Aorta (tissue), 5 donors: ENCODE measurements at regions of chr19 and their contacts with region 1.

Region 1: GRCh38 chr19:15379083-15379995 is at the start of gene AKAP8:
- DNase-seq: peak; percentile 99
- ATAC-seq: peak; percentile 98
- H3K4me3 ChIP-seq: peak within 1 kb of the TSS; percentile 78 to 82
- H3K27ac ChIP-seq: peak within 1 kb of the TSS; percentile 71 to 87
- H3K4me1 ChIP-seq: no peaks in the 10 kb centered on the region
- H3K27me3 ChIP-seq: no peaks in the 10 kb centered on the region
- total RNA-seq, gene AKAP8: 35.3 to 48.1 TPM

Region 2: GRCh38 chr19:15050639-15051038 is 328.7 kb before region 1 on chr19:
- intact Hi-C with region 1: no loop called
- DNase-seq: no peak
- ATAC-seq: no peak
- H3K4me3 ChIP-seq: no peak overlapping the region
- H3K27ac ChIP-seq: no peak overlapping the region
- H3K4me1 ChIP-seq: no peaks in the 10 kb centered on the region
- H3K27me3 ChIP-seq: no peaks in the 10 kb centered on the region

Region 3: DNA sequence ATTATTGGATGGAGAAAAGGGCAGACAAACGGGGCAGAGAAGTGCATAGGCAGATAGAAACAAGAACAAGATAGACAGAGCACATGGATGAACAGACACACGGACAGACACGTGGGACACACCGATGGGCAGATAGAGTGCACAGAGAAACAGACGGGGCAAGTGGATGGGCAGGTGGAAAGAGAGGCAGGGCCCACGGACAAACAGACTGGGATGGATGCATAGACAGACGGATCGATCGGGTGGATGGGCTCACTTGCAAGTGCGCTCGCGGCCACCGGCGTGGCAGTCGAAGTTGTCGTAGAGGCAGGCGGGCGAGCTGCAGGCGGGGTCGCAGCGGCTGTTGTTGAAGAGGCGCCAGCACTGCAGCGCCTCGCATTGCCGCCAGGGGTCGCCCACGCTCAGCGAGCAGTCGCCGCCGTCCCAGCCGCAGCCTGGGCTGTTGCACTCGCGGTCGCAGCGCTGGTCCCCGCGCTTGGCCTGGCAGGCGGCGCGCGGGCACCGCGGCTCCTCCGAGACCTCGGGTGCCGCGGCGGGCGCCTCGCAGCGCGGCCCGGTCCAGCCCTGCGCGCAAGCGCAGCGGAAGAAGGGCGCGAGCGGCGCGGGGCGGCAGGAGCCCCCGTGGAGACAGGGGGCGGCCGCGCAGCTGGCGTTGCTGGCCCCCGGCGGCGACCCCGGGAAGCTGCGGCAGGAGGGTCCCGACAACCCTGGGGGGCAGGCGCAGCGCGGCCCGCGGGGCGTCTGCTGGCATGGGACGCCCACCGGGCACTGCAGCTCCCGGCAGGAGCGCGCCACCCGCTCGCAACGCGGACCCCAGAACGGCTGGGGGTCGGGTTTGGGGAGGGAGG is 201.8 kb before region 1 on chr19:
- intact Hi-C with region 1: loop called (anchors 5 to 10 kb)
- DNase-seq: peak; percentile 89 to 95
- ATAC-seq: peak; percentile 94
- H3K4me3 ChIP-seq: no peak overlapping the region
- H3K27ac ChIP-seq: peak overlapping the region in 1 of 2 donors; percentile 11
- H3K4me1 ChIP-seq: no peaks in the 10 kb centered on the region
- H3K27me3 ChIP-seq: no peaks in the 10 kb centered on the region

Region 4: DNA sequence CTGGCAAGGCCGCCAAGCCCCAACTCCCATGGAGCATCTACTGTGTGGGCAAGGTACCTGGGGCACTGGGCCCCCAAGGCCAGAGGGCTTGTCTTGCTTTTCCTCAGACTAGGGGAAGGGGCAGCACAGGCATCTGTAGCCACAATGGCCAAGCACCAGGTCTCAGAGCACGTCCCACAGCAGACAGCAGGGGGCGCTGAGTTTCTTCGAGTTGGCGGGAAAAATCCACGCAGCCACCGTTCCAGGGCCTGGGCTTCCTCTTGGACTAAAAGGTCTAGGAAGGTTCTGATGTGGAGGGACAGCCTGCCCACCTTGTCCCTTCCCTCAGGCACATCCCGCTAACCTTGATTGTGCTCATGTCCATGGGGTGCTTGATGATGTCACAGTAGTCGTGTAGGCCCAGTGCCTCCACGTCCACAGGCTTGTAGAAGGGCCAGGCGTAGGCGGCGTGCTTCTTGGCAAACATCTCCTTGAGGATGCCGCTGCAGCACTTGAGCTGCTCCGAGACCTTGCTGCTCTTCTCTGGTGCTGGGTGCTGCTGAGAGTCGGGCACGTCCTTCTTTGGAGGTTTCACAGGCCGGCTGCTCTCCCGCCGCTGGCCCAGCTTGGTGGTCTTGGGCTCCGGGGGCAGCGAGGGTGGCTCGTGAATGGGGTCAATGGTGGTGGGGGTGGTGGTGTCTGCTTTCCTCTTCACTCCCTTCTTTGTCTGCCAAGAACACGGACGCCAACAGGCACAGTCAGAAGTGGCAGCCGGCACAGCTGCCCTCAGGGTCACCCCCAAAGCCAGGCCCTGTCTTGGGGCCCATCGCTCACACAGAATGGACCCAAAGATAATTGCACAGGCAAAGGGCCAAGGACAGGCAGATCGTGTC is 115.0 kb before region 1 on chr19:
- intact Hi-C with region 1: loop called in 1 of 2 experiments (anchors 2 kb)
- DNase-seq: peak; percentile 86 to 94
- ATAC-seq: peak; percentile 63
- H3K4me3 ChIP-seq: no peak overlapping the region
- H3K27ac ChIP-seq: peak overlapping the region in 1 of 2 donors; percentile 39
- H3K4me1 ChIP-seq: no peaks in the 10 kb centered on the region
- H3K27me3 ChIP-seq: no peaks in the 10 kb centered on the region

Region 5: DNA sequence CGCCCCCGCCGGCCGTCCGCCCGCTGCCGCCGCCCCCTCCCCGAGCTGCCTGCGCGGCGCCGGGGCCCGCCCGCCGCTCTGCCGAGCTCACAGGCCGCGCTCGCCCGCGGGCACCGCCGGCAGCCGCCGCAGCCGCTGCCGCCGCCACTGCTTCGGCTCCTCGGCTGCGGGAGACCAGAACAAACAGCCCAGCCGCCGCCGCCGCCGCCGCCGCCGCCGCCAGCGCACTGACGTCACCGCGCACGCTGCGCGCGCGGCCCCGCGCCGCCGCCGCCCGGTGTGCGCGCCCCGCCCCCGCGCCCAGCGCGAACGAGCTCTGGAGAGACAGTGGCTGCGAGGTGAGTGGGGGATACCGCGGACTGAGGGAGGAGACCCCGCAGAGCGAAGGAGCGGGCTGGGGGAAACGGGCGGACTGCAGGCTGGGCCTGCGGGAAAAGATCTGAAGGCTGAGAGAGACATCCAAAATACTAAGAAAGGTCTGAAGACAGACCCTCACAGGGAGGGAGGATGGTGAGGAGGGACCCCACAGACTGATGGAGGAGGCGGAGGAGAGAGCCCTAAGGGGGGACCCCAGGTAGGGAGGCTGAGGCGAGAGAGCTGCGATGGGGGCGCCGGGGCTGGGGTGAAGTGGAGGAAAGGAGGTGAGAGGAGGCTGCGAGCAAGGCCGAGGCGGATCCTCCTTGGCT is 46.9 kb before region 1 on chr19 and contains the start of gene BRD4:
- intact Hi-C with region 1: loop called (anchors 5 kb)
- DNase-seq: peak; percentile 80 to 91
- ATAC-seq: peak; percentile 85
- H3K4me3 ChIP-seq: peak within 1 kb of the TSS; percentile 99 to 100
- H3K27ac ChIP-seq: peak within 1 kb of the TSS; percentile 99 to 100
- H3K4me1 ChIP-seq: peaks cover 0 to 2% of the 10 kb centered on the region in 2 donors
- H3K27me3 ChIP-seq: no peaks in the 10 kb centered on the region
- total RNA-seq, gene BRD4: 123 to 126 TPM

Region 6: GRCh38 chr19:15418588-15419412 is 39.5 kb after region 1 on chr19 and contains the start of gene AKAP8L:
- intact Hi-C with region 1: loop called in 1 of 2 experiments (anchors 1 kb)
- DNase-seq: peak; percentile 99
- ATAC-seq: peak; percentile 97
- H3K4me3 ChIP-seq: peak within 1 kb of the TSS; percentile 77 to 86
- H3K27ac ChIP-seq: peak within 1 kb of the TSS; percentile 62 to 93
- H3K4me1 ChIP-seq: no peaks in the 10 kb centered on the region
- H3K27me3 ChIP-seq: no peaks in the 10 kb centered on the region
- total RNA-seq, gene AKAP8L: 70.8 to 106 TPM

Region 7: GRCh38 chr19:15479391-15480345 is 100.3 kb after region 1 on chr19 and contains the start of gene PGLYRP2:
- intact Hi-C with region 1: no loop called
- DNase-seq: peak in 1 of 2 donors; percentile 72
- ATAC-seq: peak; percentile 50
- H3K4me3 ChIP-seq: no peak within 1 kb of the TSS
- H3K27ac ChIP-seq: no peak within 1 kb of the TSS
- H3K4me1 ChIP-seq: no peaks in the 10 kb centered on the region
- H3K27me3 ChIP-seq: no peaks in the 10 kb centered on the region
- total RNA-seq, gene PGLYRP2: not detected